Ascending aorta (tissue), 2 donors: ENCODE measurements at regions of chr4 and their contacts with region 1.

Region 1: DNA sequence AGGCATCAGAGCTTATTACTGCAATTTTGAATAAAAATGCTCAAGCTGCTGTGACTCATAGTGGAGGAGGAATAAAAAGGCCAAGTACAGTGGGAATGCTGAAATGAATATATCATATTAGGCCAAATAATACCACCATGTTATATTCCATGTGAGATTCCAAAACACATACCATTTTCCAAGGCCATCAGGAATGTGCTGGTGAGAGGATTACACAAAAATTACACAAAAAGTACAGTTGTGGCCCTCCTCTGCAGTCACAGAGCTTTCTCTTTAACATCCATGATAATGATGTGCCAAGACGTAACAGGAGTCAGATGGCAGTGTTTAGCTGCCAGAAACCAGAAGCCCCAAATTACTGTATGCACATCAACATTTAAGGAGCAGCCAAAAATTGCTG is 153.5 kb downstream of the PCDH18 start:
- DNase-seq: no peak
- H3K4me3 ChIP-seq: no peak overlapping the region
- H3K27ac ChIP-seq: no peak overlapping the region
- H3K4me1 ChIP-seq: peaks cover 0 to 19% of the 10 kb centered on the region in 2 donors
- H3K27me3 ChIP-seq: no peaks in the 10 kb centered on the region
- CTCF ChIP-seq: no peak

Region 2: GRCh38 chr4:136400829-136401228 is 978.0 kb before region 1 on chr4:
- intact Hi-C with region 1: no loop called
- DNase-seq: no peak
- H3K4me3 ChIP-seq: no peak overlapping the region
- H3K27ac ChIP-seq: no peak overlapping the region
- H3K4me1 ChIP-seq: no peaks in the 10 kb centered on the region
- H3K27me3 ChIP-seq: no peaks in the 10 kb centered on the region
- CTCF ChIP-seq: no peak

Region 3: DNA sequence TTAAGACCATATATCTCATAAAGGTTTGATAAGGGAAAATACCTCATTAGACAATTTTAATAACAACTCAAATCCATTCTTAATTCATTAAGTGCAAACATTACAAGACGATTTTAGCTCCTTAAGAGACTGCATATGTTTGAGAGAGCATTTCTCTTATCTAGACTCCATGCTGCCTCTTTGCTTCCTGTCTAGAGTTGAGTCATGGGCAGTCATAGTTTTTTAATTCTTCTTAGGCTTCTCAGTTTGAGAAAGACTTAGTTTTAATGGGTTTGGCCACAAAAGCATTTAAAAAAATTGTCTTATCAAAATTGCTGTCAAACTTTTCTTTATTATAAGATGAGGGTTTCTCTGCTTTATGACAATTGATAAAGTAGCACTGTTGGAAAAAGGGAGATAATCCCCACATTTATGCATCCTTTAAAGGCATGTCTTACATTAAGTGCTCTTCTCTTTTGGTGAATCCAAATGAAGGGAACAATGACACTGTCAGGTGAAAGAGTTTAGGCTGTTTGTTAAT is 560.0 kb before region 1 on chr4:
- intact Hi-C with region 1: no loop called
- DNase-seq: no peak
- H3K4me3 ChIP-seq: no peak overlapping the region
- H3K27ac ChIP-seq: no peak overlapping the region
- H3K4me1 ChIP-seq: no peaks in the 10 kb centered on the region
- H3K27me3 ChIP-seq: no peaks in the 10 kb centered on the region
- CTCF ChIP-seq: no peak

Region 4: DNA sequence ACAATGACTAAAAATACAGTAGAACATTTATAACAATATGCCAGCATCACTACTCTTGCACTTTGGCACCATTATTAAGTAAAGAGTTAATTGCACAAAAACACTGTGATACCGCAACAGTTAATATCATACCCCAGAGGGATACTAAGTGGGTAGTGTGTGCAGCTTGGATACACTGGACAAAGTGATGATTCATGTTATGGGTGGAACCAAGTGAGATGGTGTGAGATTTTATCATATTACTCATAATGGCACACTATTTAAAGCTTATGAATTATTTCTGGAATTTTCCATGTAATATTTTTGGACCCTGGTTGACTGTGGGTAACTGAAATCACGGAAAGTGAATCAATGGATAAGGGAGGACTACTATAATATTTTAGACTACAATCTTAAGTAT is 111.8 kb before region 1 on chr4:
- intact Hi-C with region 1: loop called (anchors 5 kb)
- DNase-seq: no peak
- H3K4me3 ChIP-seq: no peak overlapping the region
- H3K27ac ChIP-seq: peak overlapping the region; percentile 45 to 46
- H3K4me1 ChIP-seq: peaks cover 0 to 15% of the 10 kb centered on the region in 2 donors
- H3K27me3 ChIP-seq: no peaks in the 10 kb centered on the region
- CTCF ChIP-seq: no peak

Region 5: DNA sequence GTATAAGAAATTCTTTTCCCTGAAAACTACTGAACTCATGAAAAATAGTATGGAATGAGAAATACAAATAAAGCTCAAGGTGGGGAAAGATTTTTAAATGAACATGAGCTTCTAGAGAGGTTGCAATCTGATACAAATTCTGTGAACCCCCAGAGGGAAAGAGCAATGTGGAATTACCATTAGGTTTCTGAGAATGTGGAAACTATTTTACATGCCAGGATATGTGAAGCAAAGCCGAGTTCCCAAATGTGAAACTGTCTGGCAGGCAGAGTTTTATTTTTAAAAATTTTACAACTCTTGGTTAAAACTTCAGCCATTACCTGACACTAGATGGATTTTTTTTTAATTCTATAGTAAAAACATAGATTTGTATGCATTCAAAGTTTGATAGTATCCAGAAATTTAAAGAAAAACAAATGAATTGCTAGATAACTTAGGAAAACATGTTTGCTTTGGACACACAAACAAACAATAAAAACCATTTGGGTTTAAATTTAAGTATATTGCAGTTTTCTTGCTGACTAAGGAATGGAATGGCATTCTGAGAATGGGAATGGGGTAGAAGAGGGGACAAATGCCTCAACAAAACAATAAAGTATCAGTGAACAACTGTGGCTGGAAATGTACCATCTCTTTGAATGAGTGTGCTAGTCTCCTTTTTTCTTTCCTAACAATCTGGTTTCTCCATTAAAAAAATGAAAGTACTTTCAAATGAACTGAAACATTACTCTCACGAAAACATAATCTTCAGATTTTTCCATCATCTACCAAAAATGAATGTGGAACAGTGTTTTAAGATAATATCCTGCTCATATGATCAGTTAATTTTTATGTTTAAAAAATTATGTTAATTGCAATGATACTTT is 53.9 kb after region 1 on chr4:
- intact Hi-C with region 1: loop called (anchors 5 kb)
- DNase-seq: no peak
- H3K4me3 ChIP-seq: peak overlapping the region; percentile 14 to 29
- H3K27ac ChIP-seq: peak overlapping the region; percentile 63 to 72
- H3K4me1 ChIP-seq: peaks cover 0 to 5% of the 10 kb centered on the region in 2 donors
- H3K27me3 ChIP-seq: no peaks in the 10 kb centered on the region
- CTCF ChIP-seq: no peak